A673 (cell line): ENCODE measurements at regions of chr3 and their contacts with region 1.

Region 1: GRCh38 chr3:171566803-171567422 is 106.7 kb upstream of the TNIK start:
- DNase-seq: peak; percentile 56
- H3K4me3 ChIP-seq: no peak overlapping the region
- H3K27ac ChIP-seq: no peak overlapping the region
- H3K4me1 ChIP-seq: no peaks in the 10 kb centered on the region
- H3K27me3 ChIP-seq: no peaks in the 10 kb centered on the region
- CTCF ChIP-seq: peak; percentile 77

Region 2: GRCh38 chr3:170961616-170962400 is 605.1 kb before region 1 on chr3:
- CTCF ChIA-PET with region 1: no interaction called
- POLR2A ChIA-PET with region 1: no interaction called
- intact Hi-C with region 1: loop called (anchors 2 kb)
- DNase-seq: peak; percentile 41
- H3K4me3 ChIP-seq: no peak overlapping the region
- H3K27ac ChIP-seq: no peak overlapping the region
- H3K4me1 ChIP-seq: no peaks in the 10 kb centered on the region
- H3K27me3 ChIP-seq: no peaks in the 10 kb centered on the region
- CTCF ChIP-seq: peak; percentile 70

Region 3: DNA sequence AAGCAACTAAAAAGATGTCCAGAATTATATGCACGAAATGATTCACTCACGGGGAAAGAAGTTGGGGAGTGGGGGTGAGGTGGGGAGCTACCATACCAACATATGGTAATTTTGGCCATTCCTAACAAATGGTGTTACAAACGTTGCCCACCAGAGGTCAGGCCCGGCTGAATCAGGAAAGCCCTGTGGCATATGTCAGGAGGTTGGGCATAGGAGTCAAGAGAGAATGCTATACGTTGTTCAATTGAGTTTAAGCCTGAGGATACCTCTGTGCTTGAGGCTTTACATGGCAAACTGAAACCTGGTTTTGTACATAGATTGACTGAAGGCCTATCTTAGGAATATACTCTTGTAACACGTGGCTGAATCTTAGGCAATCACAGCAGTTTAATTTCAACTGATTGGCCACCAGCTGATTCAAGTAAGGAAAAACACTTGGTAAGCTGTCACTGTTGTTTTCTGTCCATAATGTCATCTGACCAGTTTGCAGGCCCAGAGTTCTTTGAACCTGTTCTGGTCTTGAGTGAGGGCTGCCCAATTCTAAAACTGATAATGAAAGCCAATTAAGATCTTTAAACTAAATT is 517.0 kb before region 1 on chr3:
- CTCF ChIA-PET with region 1: no interaction called
- POLR2A ChIA-PET with region 1: no interaction called
- intact Hi-C with region 1: loop called (anchors 2 kb)
- DNase-seq: peak; percentile 58
- H3K4me3 ChIP-seq: no peak overlapping the region
- H3K27ac ChIP-seq: no peak overlapping the region
- H3K4me1 ChIP-seq: no peaks in the 10 kb centered on the region
- H3K27me3 ChIP-seq: no peaks in the 10 kb centered on the region
- CTCF ChIP-seq: peak; percentile 60

Region 4: DNA sequence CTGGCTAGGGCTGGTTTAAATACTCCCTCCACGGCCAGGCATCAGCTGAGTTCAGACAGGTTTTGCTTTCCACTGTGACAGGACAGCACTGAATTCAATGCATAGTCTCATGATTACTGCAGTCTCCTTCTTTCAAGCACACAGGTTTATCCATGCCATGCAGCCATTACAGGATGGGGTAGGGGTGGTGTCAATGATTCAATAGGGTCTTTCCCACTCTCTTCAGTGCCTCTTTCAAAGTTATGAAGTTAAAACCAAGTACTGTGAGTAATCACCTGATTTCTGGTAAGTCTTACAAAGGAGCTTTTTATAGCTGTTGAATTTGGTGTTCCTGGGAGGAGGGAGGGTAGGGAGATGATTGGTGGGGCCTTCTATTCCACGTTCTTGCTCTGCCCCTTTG is 323.5 kb after region 1 on chr3:
- CTCF ChIA-PET with region 1: no interaction called
- POLR2A ChIA-PET with region 1: no interaction called
- intact Hi-C with region 1: no loop called
- DNase-seq: no peak
- H3K4me3 ChIP-seq: no peak overlapping the region
- H3K27ac ChIP-seq: no peak overlapping the region
- H3K4me1 ChIP-seq: peaks cover 1% of the 10 kb centered on the region
- H3K27me3 ChIP-seq: no peaks in the 10 kb centered on the region
- CTCF ChIP-seq: no peak